PC-9 (cell line): ENCODE measurements at regions of chr14 and their contacts with region 1.

Region 1: GRCh38 chr14:88868558-88869159 is 44.2 kb downstream of the TTC8 start:
- DNase-seq: no peak
- H3K4me3 ChIP-seq: no peak overlapping the region
- H3K27ac ChIP-seq: no peak overlapping the region
- H3K4me1 ChIP-seq: no peaks in the 10 kb centered on the region
- H3K27me3 ChIP-seq: no peaks in the 10 kb centered on the region
- CTCF ChIP-seq: peak; percentile 43; the same call in 1 of the 2 replicates

Region 2: DNA sequence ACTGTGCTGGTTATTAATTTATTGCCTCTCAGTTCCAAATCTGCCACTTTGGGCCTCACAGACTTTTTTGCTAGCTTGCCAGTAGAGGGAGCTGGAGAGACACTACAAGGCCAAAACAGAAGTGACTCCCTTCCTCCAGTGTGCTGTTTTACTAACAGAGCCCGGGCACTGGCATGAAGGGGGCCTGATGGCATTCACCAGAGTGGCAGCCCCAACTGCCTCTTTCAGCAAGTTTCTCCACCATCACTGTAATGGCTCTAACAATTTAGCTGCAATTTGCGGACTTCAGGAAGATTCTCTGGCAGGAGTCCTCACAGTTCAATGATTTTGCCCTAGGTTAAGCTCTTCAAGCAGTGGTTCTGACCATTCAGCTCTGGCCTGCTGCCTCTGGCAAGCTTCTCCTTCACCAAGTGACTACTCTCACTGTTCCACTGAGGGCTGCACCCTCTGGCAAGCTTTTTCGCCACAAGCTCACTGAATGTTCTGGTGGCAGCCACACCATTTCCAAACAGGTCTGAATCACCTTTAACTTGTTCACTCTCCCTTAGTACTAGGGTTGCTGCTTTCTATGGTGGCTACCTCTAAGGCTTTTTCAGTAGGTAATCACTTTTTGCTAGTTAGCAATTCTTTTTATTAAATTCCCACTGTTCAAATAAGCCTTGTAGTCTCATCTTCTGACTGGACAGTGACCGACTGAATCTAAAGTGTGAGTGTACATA is 200.9 kb before region 1 on chr14:
- CTCF ChIA-PET with region 1: no interaction called
- POLR2A ChIA-PET with region 1: no interaction called
- intact Hi-C with region 1: loop called (anchors 1 kb)
- DNase-seq: peak in 1 of 2 experiments; percentile 40
- H3K4me3 ChIP-seq: no peak overlapping the region
- H3K27ac ChIP-seq: no peak overlapping the region
- H3K4me1 ChIP-seq: no peaks in the 10 kb centered on the region
- H3K27me3 ChIP-seq: no peaks in the 10 kb centered on the region
- CTCF ChIP-seq: peak; percentile 76